ENCODE measurements at regions of chr3 and their contacts with region 1.

Region 1: DNA sequence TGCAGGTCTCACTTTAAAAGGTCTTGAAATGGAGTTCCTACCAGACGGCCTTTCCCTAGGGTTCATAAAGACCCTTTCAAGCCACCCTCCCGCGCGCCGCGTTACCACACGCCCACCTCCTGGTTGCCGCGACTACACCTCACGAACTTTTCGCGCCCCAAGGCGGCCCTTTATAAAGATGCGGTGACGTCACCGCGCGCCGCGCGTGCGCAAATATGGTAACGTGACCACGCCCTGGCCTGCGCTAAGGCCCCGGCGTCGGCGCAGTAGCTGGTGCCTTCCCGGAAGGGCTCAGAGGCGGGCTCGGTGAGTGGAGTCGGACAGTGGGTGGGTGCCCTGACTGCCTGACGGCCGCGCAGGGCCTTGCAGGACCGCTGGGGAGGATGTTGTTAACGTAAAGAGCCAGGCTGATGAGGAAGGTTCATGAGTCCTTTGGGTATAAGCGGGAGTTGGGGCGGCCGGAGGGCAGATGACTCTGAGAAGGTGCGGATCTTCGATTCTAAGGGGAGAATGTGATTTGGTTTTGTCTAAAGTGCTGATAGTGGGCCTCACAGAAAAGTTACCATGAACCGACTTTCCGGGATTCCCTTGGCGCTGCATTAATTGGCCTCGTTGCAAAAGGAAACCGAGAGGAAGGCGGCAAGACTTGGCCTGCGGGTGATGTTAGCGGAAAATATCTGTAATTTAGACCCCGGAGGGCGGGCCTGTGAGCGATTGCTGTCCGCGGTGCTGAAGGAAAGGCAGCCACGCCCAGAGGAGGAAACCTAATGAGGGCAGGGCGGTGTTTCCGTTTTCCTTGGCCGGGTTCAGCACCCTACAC is 54.4 kb downstream of the FEZF2 start:
- DNase-seq: peak; percentile 82 to 89 (median 86)
- ATAC-seq: peak; percentile 99
- H3K4me3 ChIP-seq: peak overlapping the region; percentile 14 to 68 (median 60)
- H3K27ac ChIP-seq: peak overlapping the region in 11 of 12 donors; percentile 6 to 82 (median 51)
- H3K4me1 ChIP-seq: peaks cover 0 to 8% (median 0%) of the 10 kb centered on the region in 12 donors
- H3K27me3 ChIP-seq: no peaks in the 10 kb centered on the region
- CTCF ChIP-seq: no peak
- POLR2A ChIP-seq: no peak

Region 2: DNA sequence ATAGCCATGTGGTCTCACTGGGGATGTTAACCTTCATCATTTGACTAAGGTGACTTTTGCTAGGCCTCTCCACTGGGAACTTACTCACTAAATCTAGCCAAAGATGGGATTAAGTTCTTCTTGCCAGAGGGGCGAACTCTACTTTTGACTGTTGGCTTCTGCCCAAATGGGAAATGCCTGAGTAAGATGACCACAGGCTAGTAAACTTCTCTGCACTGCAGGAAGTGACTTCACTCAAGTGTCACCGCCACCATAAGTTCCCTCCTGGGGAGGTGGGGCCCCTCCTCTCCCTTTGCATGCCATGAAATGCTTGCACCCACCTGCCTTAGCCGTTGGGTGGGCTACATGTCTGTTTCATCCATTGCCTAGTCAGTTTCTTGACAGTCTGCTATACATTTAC is 333.9 kb before region 1 on chr3:
- intact Hi-C with region 1: no loop called
- DNase-seq: no peak
- ATAC-seq: peak in 2 of 4 donors; percentile 16 to 31
- H3K4me3 ChIP-seq: no peak overlapping the region
- H3K27ac ChIP-seq: no peak overlapping the region
- H3K4me1 ChIP-seq: peaks cover 0 to 51% (median 13%) of the 10 kb centered on the region in 12 donors
- H3K27me3 ChIP-seq: no peaks in the 10 kb centered on the region
- CTCF ChIP-seq: no peak
- POLR2A ChIP-seq: no peak

Region 3: GRCh38 chr3:62201438-62202035 is 117.4 kb before region 1 on chr3:
- intact Hi-C with region 1: loop called in 3 of 10 experiments (anchors 10 kb)
- DNase-seq: no peak
- ATAC-seq: peak in 1 of 4 donors; percentile 51
- H3K4me3 ChIP-seq: no peak overlapping the region
- H3K27ac ChIP-seq: no peak overlapping the region
- H3K4me1 ChIP-seq: no peaks in the 10 kb centered on the region
- H3K27me3 ChIP-seq: no peaks in the 10 kb centered on the region
- CTCF ChIP-seq: peak; percentile 35 to 69 (median 52)
- POLR2A ChIP-seq: no peak

Region 4: DNA sequence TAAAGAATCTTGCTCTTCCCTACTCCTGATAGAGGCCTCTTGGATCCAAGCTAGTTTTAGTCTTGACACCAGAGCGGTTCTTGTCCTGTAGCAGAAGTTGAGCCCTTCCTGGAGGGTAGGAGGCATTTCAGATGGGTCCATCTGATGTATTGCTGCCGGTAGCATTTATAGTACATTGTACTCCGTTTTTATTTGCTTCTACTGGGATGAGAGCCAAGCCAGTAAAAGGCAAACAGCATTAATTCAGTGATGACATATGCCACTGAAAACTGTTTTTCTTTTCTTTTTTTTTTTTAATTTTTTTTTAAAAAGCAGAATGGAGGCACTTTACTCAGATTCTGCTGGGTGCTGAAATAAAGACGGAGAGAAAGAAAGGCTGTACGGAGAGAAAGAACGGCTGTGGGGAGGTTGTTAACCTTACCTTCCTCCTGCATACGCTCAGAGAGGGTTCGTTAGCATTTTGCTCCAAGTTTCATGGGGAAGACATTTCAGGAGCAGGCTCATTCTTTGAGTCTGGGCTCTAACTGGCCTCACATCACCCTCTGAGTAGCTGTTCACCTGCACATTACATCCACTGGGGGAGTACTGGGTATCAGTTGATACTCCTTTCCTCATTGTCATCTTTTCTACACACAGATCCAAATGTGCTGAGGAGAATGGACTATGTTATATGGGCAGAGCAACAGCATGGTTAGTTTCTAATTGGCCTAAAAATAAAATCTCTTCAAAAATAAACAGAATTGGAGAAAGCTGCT is 107.1 kb before region 1 on chr3:
- intact Hi-C with region 1: loop called in 4 of 10 experiments (anchors 10 kb)
- DNase-seq: no peak
- ATAC-seq: no peak
- H3K4me3 ChIP-seq: no peak overlapping the region
- H3K27ac ChIP-seq: no peak overlapping the region
- H3K4me1 ChIP-seq: peaks cover 0 to 15% (median 0%) of the 10 kb centered on the region in 12 donors
- H3K27me3 ChIP-seq: no peaks in the 10 kb centered on the region
- CTCF ChIP-seq: no peak
- POLR2A ChIP-seq: no peak